Activated CD4-positive, alpha-beta T cell treated with anti-CD3 and anti-CD28 coated beads for 36 hours (primary cell): ENCODE measurements at regions of chr18 and their contacts with region 1.

Region 1: GRCh38 chr18:26383454-26384270 is 157.4 kb downstream of the TAF4B start:
- DNase-seq: no peak
- ATAC-seq: peak; percentile 58
- H3K4me3 Mint-ChIP-seq: no peak overlapping the region
- H3K27ac Mint-ChIP-seq: no peak overlapping the region
- H3K4me1 Mint-ChIP-seq: no peaks in the 10 kb centered on the region
- H3K27me3 Mint-ChIP-seq: no peaks in the 10 kb centered on the region

Region 2: GRCh38 chr18:25946540-25946939 is 437.1 kb before region 1 on chr18:
- CTCF ChIA-PET with region 1: no interaction called
- POLR2A ChIA-PET with region 1: no interaction called
- intact Hi-C with region 1: no loop called
- DNase-seq: no peak
- ATAC-seq: no peak
- H3K4me3 Mint-ChIP-seq: no peak overlapping the region
- H3K27ac Mint-ChIP-seq: no peak overlapping the region
- H3K4me1 Mint-ChIP-seq: no peaks in the 10 kb centered on the region
- H3K27me3 Mint-ChIP-seq: peaks cover 3% of the 10 kb centered on the region

Region 3: GRCh38 chr18:26405190-26405801 is 21.6 kb after region 1 on chr18:
- CTCF ChIA-PET with region 1: interaction called, 11 read pairs
- POLR2A ChIA-PET with region 1: no interaction called
- intact Hi-C with region 1: no loop called
- DNase-seq: peak; percentile 41
- ATAC-seq: peak; percentile 47
- H3K4me3 Mint-ChIP-seq: no peak overlapping the region
- H3K27ac Mint-ChIP-seq: no peak overlapping the region
- H3K4me1 Mint-ChIP-seq: no peaks in the 10 kb centered on the region
- H3K27me3 Mint-ChIP-seq: no peaks in the 10 kb centered on the region

Region 4: DNA sequence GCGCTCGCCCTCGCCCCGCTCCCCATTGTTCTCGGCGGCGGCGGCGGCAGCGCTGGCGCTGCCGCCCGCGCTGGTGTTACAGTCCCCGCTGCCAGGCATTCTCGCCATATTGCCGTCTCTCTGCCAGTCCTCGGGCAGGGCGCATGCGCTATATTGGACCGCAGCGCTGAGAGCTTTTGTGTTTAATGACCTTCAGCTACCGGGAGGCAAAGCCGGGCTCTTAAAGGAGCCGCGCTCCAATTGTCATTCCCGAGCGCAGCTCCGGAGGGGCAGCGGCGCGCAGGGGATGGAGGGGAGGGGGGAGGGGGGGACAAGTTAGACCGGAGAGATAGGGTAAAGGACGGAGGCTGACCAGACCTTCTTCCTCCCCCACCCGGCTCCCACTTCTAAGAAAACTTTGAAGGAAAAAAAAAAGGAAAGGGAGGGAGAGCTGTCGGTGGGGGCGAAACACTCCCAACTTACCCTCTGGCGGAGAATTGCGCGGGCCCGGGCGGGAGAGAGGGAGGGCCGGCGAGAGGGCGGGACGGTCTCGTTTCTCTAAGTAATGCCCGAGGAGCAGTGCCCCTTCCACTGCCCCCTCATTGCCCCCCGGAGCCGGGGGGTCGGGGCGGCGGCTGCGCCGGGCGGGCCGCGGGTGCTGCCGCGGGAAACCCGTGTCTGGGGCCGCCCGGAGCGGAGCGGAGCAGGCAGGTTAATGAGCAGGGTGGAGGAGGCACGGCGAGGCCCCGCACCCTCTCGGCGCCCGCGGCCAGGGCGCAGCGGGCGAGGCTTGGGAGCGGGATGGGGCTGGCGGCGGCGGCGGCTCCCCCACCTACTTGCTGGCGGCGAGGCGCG is 165.0 kb after region 1 on chr18 and contains the start of gene KCTD1:
- CTCF ChIA-PET with region 1: interaction called, 4 read pairs
- POLR2A ChIA-PET with region 1: no interaction called
- intact Hi-C with region 1: loop called in 1 of 2 experiments (anchors 5 kb)
- DNase-seq: peak; percentile 87
- ATAC-seq: peak; percentile 80
- H3K4me3 Mint-ChIP-seq: peak within 1 kb of the TSS; percentile 73
- H3K27ac Mint-ChIP-seq: no peak within 1 kb of the TSS
- H3K4me1 Mint-ChIP-seq: peaks cover 28% of the 10 kb centered on the region
- H3K27me3 Mint-ChIP-seq: peaks cover 38% of the 10 kb centered on the region
- total RNA-seq, gene KCTD1: 3.2 to 4.2 TPM

Region 5: DNA sequence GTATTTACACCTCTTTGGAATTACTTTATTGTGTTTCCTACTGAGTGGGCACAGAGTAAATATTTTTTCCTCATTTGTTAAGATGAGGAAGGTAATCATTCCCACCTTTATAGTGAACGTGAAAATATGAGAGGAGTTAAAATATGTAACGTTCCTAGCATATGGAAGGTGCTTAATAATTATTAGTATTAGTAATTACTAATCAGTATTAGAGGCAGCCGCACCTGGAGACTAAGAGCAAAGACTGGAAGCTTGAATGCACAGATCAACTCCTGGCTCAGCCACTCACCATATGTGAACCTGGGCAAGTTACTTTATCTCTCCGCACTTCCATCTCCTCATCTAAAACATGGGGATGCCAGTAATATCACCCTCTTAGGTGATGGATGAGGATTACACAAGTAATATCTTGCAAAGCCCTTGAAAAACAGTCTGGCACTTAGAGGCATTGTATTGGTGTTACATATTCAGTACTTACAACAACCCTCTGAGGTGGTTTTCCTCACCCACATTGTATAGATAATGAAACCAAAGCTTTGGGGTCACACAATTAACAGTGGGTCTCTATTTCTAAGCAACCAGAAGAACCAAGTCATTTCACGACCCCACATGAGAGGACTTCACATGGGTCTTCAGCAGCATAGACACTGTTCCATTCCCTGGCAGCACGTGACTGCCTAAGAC is 265.0 kb after region 1 on chr18:
- CTCF ChIA-PET with region 1: interaction called, 9 read pairs
- POLR2A ChIA-PET with region 1: no interaction called
- intact Hi-C with region 1: loop called (anchors 1 to 2 kb)
- DNase-seq: no peak
- ATAC-seq: no peak
- H3K4me3 Mint-ChIP-seq: no peak overlapping the region
- H3K27ac Mint-ChIP-seq: no peak overlapping the region
- H3K4me1 Mint-ChIP-seq: no peaks in the 10 kb centered on the region
- H3K27me3 Mint-ChIP-seq: peaks cover 31% of the 10 kb centered on the region

Region 6: GRCh38 chr18:26771524-26771923 is 387.9 kb after region 1 on chr18:
- CTCF ChIA-PET with region 1: no interaction called
- POLR2A ChIA-PET with region 1: no interaction called
- intact Hi-C with region 1: no loop called
- DNase-seq: no peak
- ATAC-seq: no peak
- H3K4me3 Mint-ChIP-seq: no peak overlapping the region
- H3K27ac Mint-ChIP-seq: no peak overlapping the region
- H3K4me1 Mint-ChIP-seq: no peaks in the 10 kb centered on the region
- H3K27me3 Mint-ChIP-seq: no peaks in the 10 kb centered on the region